AG04450 (cell line): ENCODE measurements at regions of chr11 and their contacts with region 1.

Region 1: GRCh38 chr11:76734456-76735420 is 48.4 kb upstream of the TSKU start:
- DNase-seq: no peak
- H3K4me3 ChIP-seq: no peak overlapping the region
- H3K27ac ChIP-seq: no peak overlapping the region
- H3K27me3 ChIP-seq: peaks cover 25% of the 10 kb centered on the region
- CTCF ChIP-seq: no peak

Region 2: DNA sequence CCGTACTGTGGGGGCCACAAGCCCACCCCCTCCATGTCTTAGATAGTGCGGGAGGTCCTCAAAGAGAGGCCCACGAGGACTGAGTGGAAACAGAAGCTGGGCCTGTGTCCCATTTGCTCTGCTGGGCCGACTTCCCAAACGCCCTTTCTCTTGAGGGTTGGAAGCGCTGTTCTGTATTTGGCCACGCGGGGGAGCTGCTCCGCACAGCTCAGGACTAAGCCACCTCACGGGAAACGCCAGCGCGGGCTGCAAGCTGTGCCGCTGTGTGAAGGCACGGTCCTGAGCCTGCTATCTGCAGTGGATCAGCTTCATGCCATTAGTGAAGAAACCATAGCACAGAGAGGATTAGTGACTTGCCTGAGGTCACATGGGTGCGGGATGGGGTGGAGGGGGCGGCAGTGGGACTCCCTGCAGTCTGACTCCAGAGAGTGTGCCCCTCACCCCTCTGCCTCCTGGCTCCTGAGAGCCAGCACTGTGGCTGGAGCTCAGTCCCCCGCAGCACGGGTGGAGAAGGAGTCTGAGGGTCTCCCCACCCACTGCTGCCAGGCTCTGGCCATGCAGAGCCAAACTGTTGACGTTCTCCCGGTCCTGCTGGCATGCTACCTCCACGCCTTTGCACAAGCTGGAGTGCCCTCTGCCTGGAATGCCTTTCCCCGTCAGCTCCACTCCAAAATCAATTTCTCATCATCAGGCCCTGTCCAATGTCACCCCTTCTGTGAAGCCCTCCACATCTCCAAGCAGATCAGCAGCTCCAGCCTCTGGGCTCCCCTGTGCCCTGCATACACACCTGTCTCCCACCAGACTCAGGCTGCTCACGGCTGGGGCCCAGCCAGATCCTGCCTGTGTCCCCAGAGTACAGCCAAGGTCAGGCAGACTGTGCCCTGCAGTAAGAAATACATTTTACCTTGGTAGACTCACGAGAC is 12.7 kb before region 1 on chr11:
- CTCF ChIA-PET with region 1: interaction called, 15 read pairs
- POLR2A ChIA-PET with region 1: no interaction called
- DNase-seq: peak; percentile 57
- H3K4me3 ChIP-seq: no peak overlapping the region
- H3K27ac ChIP-seq: no peak overlapping the region
- H3K27me3 ChIP-seq: peaks cover 34% of the 10 kb centered on the region
- CTCF ChIP-seq: peak; percentile 91

Region 3: GRCh38 chr11:76799066-76799804 is 64.5 kb after region 1 on chr11:
- CTCF ChIA-PET with region 1: interaction called, 99 read pairs
- POLR2A ChIA-PET with region 1: interaction called, 4 read pairs
- DNase-seq: no peak
- H3K4me3 ChIP-seq: no peak overlapping the region
- H3K27ac ChIP-seq: no peak overlapping the region
- H3K27me3 ChIP-seq: no peaks in the 10 kb centered on the region
- CTCF ChIP-seq: peak; percentile 74

Region 4: GRCh38 chr11:76807206-76807875 is 72.6 kb after region 1 on chr11:
- CTCF ChIA-PET with region 1: interaction called, 99 read pairs
- POLR2A ChIA-PET with region 1: no interaction called
- DNase-seq: no peak
- H3K4me3 ChIP-seq: no peak overlapping the region
- H3K27ac ChIP-seq: no peak overlapping the region
- H3K27me3 ChIP-seq: no peaks in the 10 kb centered on the region
- CTCF ChIP-seq: peak; percentile 81